ENCODE measurements at regions of chr9 and their contacts with region 1.

Region 1: GRCh38 chr9:135961277-135961705 is at the start of gene UBAC1:
- DNase-seq: peak; percentile 93
- H3K4me3 Mint-ChIP-seq: peak within 1 kb of the TSS; percentile 87
- H3K27ac Mint-ChIP-seq: peak within 1 kb of the TSS; percentile 82
- H3K4me1 Mint-ChIP-seq: peaks cover 25% of the 10 kb centered on the region
- H3K27me3 Mint-ChIP-seq: peaks cover 8% of the 10 kb centered on the region
- total RNA-seq, gene UBAC1: 41.9 and 42.0 TPM in 2 replicates

Region 2: DNA sequence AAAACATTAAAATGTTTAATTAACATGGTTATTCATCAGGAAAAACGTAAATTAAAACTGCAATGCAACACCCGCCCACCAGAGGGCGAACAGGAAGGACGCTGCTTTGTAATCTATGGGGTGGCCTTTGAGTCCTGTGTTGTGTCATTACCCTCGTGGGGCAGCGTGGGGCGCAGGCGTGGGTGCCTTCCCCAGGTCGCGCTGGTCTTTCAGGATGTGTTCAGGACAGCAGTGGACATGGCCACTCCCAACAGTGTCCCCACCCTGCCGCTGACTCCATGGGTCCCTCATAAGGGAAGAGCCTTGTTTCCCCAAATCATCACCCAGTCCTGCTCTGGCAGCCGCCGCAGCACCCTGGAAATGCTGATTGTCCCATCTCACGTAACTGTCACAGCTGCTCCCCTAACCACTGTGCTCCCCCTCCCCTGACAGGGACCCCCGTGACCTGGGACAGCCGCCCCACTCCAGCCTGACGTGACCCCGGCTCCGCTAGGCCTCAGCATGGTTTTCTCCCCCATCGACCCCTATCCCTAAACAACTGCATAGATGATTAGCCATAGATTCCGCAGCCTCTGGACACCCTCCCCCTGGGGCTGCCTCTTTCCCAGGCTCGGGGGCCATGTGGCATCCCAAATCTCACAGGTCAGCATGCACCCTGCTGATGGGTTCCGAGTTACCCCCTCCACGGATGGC is 358.4 kb before region 1 on chr9:
- intact Hi-C with region 1: loop called (anchors 10 kb)
- DNase-seq: no peak
- H3K4me3 Mint-ChIP-seq: no peak overlapping the region
- H3K27ac Mint-ChIP-seq: no peak overlapping the region
- H3K4me1 Mint-ChIP-seq: no peaks in the 10 kb centered on the region
- H3K27me3 Mint-ChIP-seq: peaks cover 4% of the 10 kb centered on the region

Region 3: DNA sequence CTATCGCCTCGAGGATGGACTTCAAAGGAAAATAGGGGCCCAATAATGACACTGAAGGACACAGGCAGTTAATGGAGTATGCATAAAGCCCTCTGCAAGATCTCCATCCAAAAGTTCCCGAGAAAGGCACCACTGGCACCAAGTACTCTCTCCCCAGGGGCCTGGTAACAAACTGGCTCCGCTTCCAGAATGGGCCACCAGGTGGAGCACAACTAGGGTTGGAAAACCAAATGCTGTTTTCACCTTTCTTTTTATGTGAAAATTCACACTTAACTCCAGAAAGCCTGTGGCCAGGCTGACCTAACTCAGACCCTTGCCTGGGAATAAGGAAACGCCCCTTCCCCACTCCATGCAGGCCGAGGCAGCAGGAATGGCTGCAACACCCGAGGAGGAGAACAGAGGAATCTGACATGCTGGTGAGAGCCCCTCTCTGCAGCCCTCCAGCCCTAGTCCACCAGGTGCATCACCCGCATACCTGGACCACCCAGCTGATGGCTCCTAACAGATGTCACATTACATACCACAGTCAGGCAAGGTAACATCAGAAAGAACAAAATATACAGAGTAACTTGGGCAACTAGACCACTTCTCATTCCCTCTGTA is 96.7 kb before region 1 on chr9:
- intact Hi-C with region 1: loop called (anchors 5 kb)
- DNase-seq: peak; percentile 39
- H3K4me3 Mint-ChIP-seq: no peak overlapping the region
- H3K27ac Mint-ChIP-seq: no peak overlapping the region
- H3K4me1 Mint-ChIP-seq: peaks cover 28% of the 10 kb centered on the region
- H3K27me3 Mint-ChIP-seq: no peaks in the 10 kb centered on the region

Region 4: DNA sequence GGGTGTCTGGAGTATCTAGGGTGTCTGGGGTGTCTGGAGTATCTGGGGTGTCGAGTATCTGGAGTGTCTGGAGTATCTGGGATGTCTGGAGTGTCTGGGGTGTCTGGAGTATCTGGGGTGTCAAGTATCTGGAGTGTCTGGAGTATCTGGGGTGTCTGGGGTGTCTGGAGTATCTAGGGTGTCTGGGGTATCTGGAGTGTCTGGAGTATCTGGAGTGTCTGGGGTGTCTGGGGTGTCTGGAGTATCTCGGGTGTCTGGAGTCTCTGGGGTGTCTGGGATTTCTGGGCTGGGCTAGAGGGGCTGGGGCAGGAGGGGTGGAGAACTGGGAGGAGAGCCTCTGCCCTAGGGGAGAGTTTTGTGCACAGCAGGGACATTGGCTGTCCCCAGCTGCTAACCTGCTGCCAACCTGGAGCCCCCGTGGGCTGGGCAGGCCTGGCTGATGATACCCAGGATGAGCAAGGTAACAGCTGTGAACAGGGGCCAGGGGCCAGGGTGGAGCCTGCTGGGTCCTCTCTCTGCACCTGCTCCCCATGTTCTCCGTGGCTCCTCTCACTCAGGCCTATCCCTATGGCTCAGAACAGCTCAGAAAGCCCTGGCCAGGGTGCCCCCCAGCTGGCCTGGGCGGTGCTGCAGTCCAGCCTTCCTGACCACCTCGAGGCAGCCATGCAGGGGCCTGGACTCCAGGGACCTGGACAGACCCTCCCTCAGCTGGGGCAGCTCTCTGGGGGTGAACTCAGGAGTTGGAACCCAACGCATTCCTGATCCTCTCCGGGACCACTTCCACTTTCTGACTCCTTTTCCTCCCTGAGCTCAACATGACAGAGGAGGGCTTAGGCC is 213.7 kb after region 1 on chr9:
- intact Hi-C with region 1: no loop called
- DNase-seq: no peak
- H3K4me3 Mint-ChIP-seq: no peak overlapping the region
- H3K27ac Mint-ChIP-seq: no peak overlapping the region
- H3K4me1 Mint-ChIP-seq: no peaks in the 10 kb centered on the region
- H3K27me3 Mint-ChIP-seq: peaks cover 5% of the 10 kb centered on the region

Measured in activated T-helper 1 cell treated with anti-CD3 and anti-CD28 coated beads, Interleukin-12 subunit alpha, Interleukin-12 subunit beta, Interleukin-2, Interleukin-4 antibody, amounts not matched to agents 30 ng/mL and 10 ng/mL and 1 ng/mL, durations not matched to agents 14 hours and 24 hours and 36 hours (primary cell).